ENCODE measurements at regions of chr4 and their contacts with region 1.

Region 1: GRCh38 chr4:56048702-56049431 is 100.1 kb downstream of the CEP135 start:
- DNase-seq: peak; percentile 46
- H3K4me3 ChIP-seq: peak overlapping the region; percentile 61 to 87 (median 73)
- H3K27ac ChIP-seq: peak overlapping the region; percentile 26
- H3K4me1 ChIP-seq: peaks cover 6% of the 10 kb centered on the region
- H3K27me3 ChIP-seq: peaks cover 3 to 4% of the 10 kb centered on the region in 2 experiments
- CTCF ChIP-seq: peak; percentile 31 to 51
- POLR2A ChIP-seq: no peak

Region 2: GRCh38 chr4:56129431-56129861 is 80.6 kb after region 1 on chr4:
- CTCF ChIA-PET with region 1: no interaction called
- POLR2A ChIA-PET with region 1: no interaction called
- dilution Hi-C with region 1: no loop called
- intact Hi-C with region 1: loop called (anchors 2 kb)
- DNase-seq: no peak
- H3K4me3 ChIP-seq: no peak overlapping the region
- H3K27ac ChIP-seq: no peak overlapping the region
- H3K4me1 ChIP-seq: peaks cover 23% of the 10 kb centered on the region
- H3K27me3 ChIP-seq: no peaks in the 10 kb centered on the region
- CTCF ChIP-seq: no peak
- POLR2A ChIP-seq: no peak

Region 3: DNA sequence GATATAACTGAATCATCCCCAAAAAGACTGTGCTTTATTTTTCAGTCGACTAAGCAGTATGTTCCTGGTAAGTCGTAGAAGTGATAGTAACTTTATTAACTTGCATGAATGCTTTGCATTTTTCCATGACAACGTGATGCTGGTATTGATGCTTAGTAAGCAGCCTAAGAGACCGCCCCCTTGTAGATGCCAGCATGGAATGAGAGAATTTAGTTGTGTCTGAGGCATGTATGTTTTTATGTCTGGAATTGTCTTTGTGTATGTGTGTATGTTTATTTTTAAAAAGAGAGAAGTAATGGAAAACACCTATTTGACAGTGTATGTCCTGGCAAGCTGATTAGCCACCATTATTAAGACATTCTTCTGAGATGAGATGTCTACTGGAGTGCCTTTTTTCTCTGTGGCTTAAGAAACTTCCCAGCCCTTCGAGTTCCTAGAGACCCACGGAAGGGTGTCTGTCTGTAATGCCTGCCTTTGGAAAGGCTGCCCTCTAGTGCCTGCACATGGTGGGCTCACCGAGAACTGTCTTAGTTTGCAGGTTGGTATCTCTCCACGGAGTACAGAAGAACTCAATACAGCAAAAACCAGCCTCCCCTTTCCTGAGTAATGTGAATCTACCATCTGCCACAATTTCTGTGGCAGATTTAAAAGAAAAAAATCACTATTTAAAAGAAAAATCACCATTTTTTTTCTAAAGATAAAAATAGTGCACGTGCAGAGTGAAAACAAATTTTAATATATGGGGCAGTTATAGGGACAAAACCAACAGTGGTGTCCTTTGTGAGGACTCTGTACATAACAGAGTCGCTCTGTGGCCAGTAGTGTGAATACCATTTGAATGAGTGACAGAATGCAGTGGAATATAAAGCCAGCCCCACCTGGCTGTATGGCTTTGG is 252.6 kb after region 1 on chr4:
- CTCF ChIA-PET with region 1: interaction called, 3 read pairs
- POLR2A ChIA-PET with region 1: no interaction called
- dilution Hi-C with region 1: no loop called
- intact Hi-C with region 1: loop called (anchors 1 kb)
- DNase-seq: peak; percentile 84
- H3K4me3 ChIP-seq: peak overlapping the region in 1 of 3 experiments; percentile 23
- H3K27ac ChIP-seq: peak overlapping the region; percentile 35
- H3K4me1 ChIP-seq: no peaks in the 10 kb centered on the region
- H3K27me3 ChIP-seq: no peaks in the 10 kb centered on the region
- CTCF ChIP-seq: peak; percentile 90
- POLR2A ChIP-seq: no peak

Region 4: DNA sequence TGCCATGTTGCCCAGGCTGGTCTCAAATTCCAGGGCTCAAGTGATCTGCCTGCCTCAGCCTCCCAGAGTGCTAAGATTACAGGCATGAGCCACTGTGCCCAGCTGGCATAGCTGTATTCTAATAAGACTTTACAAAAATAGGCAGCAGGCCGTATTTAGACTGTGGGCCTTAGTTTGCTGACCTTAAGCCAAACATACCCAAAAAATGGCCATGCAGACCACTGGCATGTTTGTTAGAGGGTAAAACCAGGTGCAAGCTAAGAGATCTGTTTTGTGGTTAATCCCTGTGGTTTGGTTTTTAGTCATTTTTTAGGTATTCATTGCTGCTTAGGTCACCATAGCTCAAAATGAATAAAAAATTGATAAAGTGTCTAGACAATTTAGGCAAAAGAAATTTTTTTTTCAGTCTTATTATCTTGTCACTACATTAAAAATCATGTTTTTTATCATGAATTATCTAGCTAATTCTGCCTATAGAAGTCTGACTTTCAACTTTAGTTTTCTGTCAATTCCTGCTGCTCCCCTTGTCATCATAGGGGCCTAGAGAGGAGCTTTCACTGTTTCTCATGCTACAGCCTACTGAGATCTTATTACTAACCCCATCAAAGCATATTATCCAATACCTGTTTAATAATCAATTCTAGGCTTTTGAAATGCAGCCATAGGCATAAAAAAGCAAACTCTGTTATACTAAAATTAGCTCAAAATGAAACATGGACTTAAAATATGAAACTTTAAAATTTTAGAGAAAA is 780.1 kb after region 1 on chr4:
- CTCF ChIA-PET with region 1: no interaction called
- POLR2A ChIA-PET with region 1: no interaction called
- dilution Hi-C with region 1: no loop called
- intact Hi-C with region 1: loop called (anchors 10 kb)
- DNase-seq: no peak
- H3K4me3 ChIP-seq: no peak overlapping the region
- H3K27ac ChIP-seq: no peak overlapping the region
- H3K4me1 ChIP-seq: no peaks in the 10 kb centered on the region
- H3K27me3 ChIP-seq: no peaks in the 10 kb centered on the region
- CTCF ChIP-seq: no peak
- POLR2A ChIP-seq: no peak

Measured in endothelial cell of umbilical vein (primary cell).